IMR-90 (cell line): ENCODE measurements at regions of chr16 and their contacts with region 1.

Region 1: GRCh38 chr16:74480141-74481029 is 59.1 kb upstream of the CLEC18B start:
- DNase-seq: no peak
- ATAC-seq: peak; percentile 54; the same call in 1 of the 2 replicates
- H3K4me3 ChIP-seq: no peak overlapping the region
- H3K27ac ChIP-seq: no peak overlapping the region
- H3K4me1 ChIP-seq: no peaks in the 10 kb centered on the region
- H3K27me3 ChIP-seq: no peaks in the 10 kb centered on the region
- CTCF ChIP-seq: no peak
- POLR2A ChIP-seq: no peak
- RAD21 ChIP-seq: no peak

Region 2: GRCh38 chr16:73725156-73725555 is 755.2 kb before region 1 on chr16:
- CTCF ChIA-PET with region 1: no interaction called
- POLR2A ChIA-PET with region 1: no interaction called
- dilution Hi-C with region 1: no loop called
- in situ Hi-C with region 1: no loop called
- intact Hi-C with region 1: no loop called
- DNase-seq: no peak
- ATAC-seq: no peak
- H3K4me3 ChIP-seq: no peak overlapping the region
- H3K27ac ChIP-seq: no peak overlapping the region
- H3K4me1 ChIP-seq: no peaks in the 10 kb centered on the region
- H3K27me3 ChIP-seq: no peaks in the 10 kb centered on the region
- CTCF ChIP-seq: no peak
- POLR2A ChIP-seq: no peak
- RAD21 ChIP-seq: no peak

Region 3: DNA sequence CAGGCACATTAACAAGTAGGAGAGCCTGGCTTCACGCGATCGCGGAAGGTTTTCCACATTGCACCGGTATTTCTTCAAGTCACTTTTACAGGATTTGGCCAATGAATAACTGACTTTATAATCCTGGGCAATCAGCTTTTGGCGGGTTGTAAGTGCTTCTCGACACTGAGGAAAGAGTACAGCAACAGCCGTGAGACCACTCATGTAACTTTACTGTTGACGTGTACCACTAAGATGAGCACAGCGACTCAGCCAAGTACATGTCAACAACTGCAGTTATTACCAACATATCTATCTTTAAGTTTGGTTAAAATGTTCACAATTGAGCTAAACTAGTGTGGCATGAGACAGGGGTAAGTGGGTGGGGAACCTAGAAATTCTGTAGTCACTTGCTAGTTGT is 12.6 kb after region 1 on chr16:
- CTCF ChIA-PET with region 1: no interaction called
- POLR2A ChIA-PET with region 1: no interaction called
- dilution Hi-C with region 1: no loop called
- in situ Hi-C with region 1: no loop called
- intact Hi-C with region 1: loop called (anchors 1 kb)
- DNase-seq: no peak
- ATAC-seq: no peak
- H3K4me3 ChIP-seq: no peak overlapping the region
- H3K27ac ChIP-seq: no peak overlapping the region
- H3K4me1 ChIP-seq: no peaks in the 10 kb centered on the region
- H3K27me3 ChIP-seq: no peaks in the 10 kb centered on the region
- CTCF ChIP-seq: no peak
- POLR2A ChIP-seq: no peak
- RAD21 ChIP-seq: no peak

Region 4: GRCh38 chr16:74606521-74607310 is 126.3 kb after region 1 on chr16 and contains the start of gene GLG1:
- CTCF ChIA-PET with region 1: no interaction called
- POLR2A ChIA-PET with region 1: no interaction called
- dilution Hi-C with region 1: no loop called
- in situ Hi-C with region 1: no loop called
- intact Hi-C with region 1: loop called (anchors 5 kb)
- DNase-seq: peak; percentile 89
- ATAC-seq: peak; percentile 91
- H3K4me3 ChIP-seq: peak within 1 kb of the TSS; percentile 83
- H3K27ac ChIP-seq: peak within 1 kb of the TSS; percentile 96
- H3K4me1 ChIP-seq: peaks cover 13% of the 10 kb centered on the region
- H3K27me3 ChIP-seq: no peaks in the 10 kb centered on the region
- CTCF ChIP-seq: no peak
- POLR2A ChIP-seq: peak; percentile 97
- RAD21 ChIP-seq: no peak; the same call in 1 of the 2 replicates
- total RNA-seq, gene GLG1: 90.0 and 91.0 TPM in 2 replicates